Activated CD4-positive, alpha-beta memory T cell treated with anti-CD3 and anti-CD28 coated beads for 36 hours (primary cell): ENCODE measurements at regions of chr9 and their contacts with region 1.

Region 1: GRCh38 chr9:121156263-121156731 is 45.4 kb downstream of the RAB14 start:
- DNase-seq: no peak
- H3K4me3 Mint-ChIP-seq: peak overlapping the region; percentile 3
- H3K27ac Mint-ChIP-seq: peak overlapping the region; percentile 90
- H3K4me1 Mint-ChIP-seq: peaks cover 24% of the 10 kb centered on the region
- H3K27me3 Mint-ChIP-seq: no peaks in the 10 kb centered on the region

Region 2: DNA sequence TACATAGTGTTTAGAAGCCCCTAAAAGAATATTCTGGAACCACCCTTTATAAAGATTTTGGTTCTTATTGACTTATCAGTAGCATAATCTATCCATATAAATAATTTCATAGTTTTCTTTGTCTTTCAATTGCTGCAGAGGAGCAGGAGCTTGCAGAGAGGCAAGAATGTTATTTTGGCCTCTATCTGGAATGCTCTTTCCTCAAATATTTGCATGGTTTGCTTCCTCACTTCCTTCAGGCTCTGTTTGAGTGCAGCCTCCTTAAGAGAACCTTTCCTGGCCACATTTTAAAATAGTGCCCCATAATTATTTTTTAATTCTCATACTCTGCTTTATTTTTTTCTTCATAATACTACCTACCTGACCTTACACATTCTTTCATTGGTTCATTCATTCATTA is 107.7 kb before region 1 on chr9:
- CTCF ChIA-PET with region 1: no interaction called
- POLR2A ChIA-PET with region 1: no interaction called
- intact Hi-C with region 1: no loop called
- DNase-seq: no peak
- H3K4me3 Mint-ChIP-seq: no peak overlapping the region
- H3K27ac Mint-ChIP-seq: no peak overlapping the region
- H3K4me1 Mint-ChIP-seq: no peaks in the 10 kb centered on the region
- H3K27me3 Mint-ChIP-seq: no peaks in the 10 kb centered on the region

Region 3: GRCh38 chr9:121169094-121169601 is 12.9 kb after region 1 on chr9:
- CTCF ChIA-PET with region 1: interaction called, 10 read pairs
- POLR2A ChIA-PET with region 1: interaction called, 3 read pairs
- intact Hi-C with region 1: no loop called
- DNase-seq: peak; percentile 29
- H3K4me3 Mint-ChIP-seq: no peak overlapping the region
- H3K27ac Mint-ChIP-seq: peak overlapping the region; percentile 61
- H3K4me1 Mint-ChIP-seq: peaks cover 18% of the 10 kb centered on the region
- H3K27me3 Mint-ChIP-seq: no peaks in the 10 kb centered on the region